Dendritic cell treated with granulocyte-macrophage colony-stimulating factor and Interleukin-4, amounts not matched to agents 40 ng/mL and 50 ng/mL, for 4 days (primary cell): ENCODE measurements at regions of chr5 and their contacts with region 1.

Region 1: GRCh38 chr5:151509231-151509630 is 61.8 kb downstream of the SLC36A1 start:
- H3K4me3 Mint-ChIP-seq: no peak overlapping the region
- H3K27ac Mint-ChIP-seq: no peak overlapping the region
- H3K4me1 Mint-ChIP-seq: no peaks in the 10 kb centered on the region
- H3K27me3 Mint-ChIP-seq: no peaks in the 10 kb centered on the region

Region 2: DNA sequence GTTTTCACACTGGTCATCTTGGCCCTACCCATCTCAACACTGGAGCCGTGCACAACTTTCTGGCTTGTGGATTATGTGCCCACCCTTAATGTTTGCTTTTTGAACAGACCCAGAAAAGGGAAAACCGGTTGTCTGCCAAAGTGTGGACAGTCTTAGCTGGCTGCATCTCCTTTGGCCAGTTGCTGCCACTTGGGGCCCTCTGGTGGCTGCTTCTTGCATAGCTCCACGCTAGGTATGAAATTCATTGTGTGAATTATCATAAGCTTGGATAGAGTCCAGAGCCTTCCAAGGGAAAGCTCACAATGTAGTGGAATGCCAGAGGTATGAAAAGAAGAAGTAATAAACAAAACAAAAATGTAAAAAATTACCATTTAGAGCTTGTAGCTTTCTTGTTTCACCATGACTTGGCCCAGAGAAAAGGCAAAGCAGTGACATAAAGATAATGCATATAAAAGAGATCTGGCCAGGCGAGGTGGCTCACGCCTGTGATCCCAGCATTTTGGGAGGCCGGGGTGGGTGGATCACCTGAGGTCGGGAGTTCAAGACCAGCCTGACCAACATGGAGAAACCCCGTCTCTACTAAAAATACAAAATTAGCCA is 193.1 kb before region 1 on chr5:
- intact Hi-C with region 1: loop called (anchors 10 kb)
- H3K4me3 Mint-ChIP-seq: no peak overlapping the region
- H3K27ac Mint-ChIP-seq: no peak overlapping the region
- H3K4me1 Mint-ChIP-seq: no peaks in the 10 kb centered on the region
- H3K27me3 Mint-ChIP-seq: peaks cover 7% of the 10 kb centered on the region

Region 3: DNA sequence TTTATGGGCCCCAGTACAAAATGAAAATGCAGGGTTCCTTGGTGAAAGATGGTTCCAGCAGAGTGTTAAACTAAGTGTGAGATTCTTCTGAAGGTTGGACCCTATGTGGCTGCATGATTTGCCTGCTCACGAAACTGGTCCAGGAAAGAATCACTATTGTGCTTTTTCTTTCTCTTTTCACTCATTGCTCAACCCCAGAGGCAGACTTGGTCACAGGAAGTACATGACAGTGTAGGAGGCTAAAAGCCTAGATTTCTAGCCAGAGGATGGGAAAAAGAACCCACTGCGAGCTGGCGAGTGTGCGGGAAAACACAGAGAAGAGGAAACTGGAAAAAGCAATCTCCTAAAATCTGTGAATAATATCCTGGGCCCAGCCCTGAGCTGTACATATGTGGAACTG is 180.5 kb before region 1 on chr5:
- intact Hi-C with region 1: no loop called
- H3K4me3 Mint-ChIP-seq: no peak overlapping the region
- H3K27ac Mint-ChIP-seq: no peak overlapping the region
- H3K4me1 Mint-ChIP-seq: peaks cover 18% of the 10 kb centered on the region
- H3K27me3 Mint-ChIP-seq: no peaks in the 10 kb centered on the region

Region 4: DNA sequence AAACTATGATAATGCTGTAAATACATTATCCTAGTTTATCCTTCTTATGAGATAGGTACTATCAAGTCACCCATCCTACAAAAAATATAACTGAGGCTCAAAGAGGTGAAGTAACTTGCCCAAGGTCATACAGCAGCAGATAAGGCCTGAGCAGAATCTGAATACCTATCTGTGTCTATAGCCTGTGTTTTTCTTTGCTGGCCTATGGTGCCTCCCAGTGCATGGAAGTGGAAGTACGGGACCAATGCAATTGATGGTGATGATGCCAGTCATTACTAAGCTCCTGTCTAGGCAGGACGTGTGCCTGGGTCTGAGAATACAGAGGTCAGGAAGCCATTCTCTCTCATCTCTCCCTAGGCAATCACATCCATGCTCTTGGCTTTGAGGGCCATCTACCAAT is 14.1 kb after region 1 on chr5:
- intact Hi-C with region 1: no loop called
- H3K4me3 Mint-ChIP-seq: no peak overlapping the region
- H3K27ac Mint-ChIP-seq: no peak overlapping the region
- H3K4me1 Mint-ChIP-seq: peaks cover 11% of the 10 kb centered on the region
- H3K27me3 Mint-ChIP-seq: no peaks in the 10 kb centered on the region